Activated T-helper 2 cell treated with anti-CD3 and anti-CD28 coated beads, Interferon-gamma antibody, Interleukin-2, Interleukin-4, amounts not matched to agents 10 μg/mL and 5 μg/mL and 100 μg/mL, durations not matched to agents 14 hours and 24 hours and 36 hours (primary cell): ENCODE measurements at regions of chr6 and their contacts with region 1.

Region 1: GRCh38 chr6:90319044-90319443 is 22.4 kb upstream of the BACH2 start:
- DNase-seq: no peak
- H3K4me3 Mint-ChIP-seq: no peak overlapping the region
- H3K27ac Mint-ChIP-seq: peak overlapping the region; percentile 74
- H3K4me1 Mint-ChIP-seq: peaks cover 25% of the 10 kb centered on the region
- H3K27me3 Mint-ChIP-seq: peaks cover 5% of the 10 kb centered on the region

Region 2: DNA sequence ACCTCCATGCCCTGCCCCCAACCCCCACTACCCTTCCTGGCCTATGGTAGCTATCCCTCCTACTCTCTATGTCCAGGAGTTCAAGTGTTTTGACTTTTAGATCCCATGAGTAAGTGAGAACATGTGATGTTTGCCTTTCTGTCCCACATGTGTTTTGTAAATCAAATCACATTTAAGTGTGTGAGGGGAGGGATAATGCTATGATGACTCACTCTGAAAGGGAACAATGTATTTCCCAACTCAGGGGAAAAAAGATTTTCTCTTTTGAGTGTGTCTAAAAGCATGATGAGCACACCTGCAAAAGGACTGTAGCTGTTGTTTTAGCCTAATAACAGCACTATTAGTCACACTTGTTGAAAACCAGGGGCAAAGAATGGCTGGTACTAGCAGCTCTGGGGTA is 231.0 kb before region 1 on chr6:
- intact Hi-C with region 1: no loop called
- DNase-seq: no peak
- H3K4me3 Mint-ChIP-seq: no peak overlapping the region
- H3K27ac Mint-ChIP-seq: peak overlapping the region; percentile 24
- H3K4me1 Mint-ChIP-seq: peaks cover 60% of the 10 kb centered on the region
- H3K27me3 Mint-ChIP-seq: no peaks in the 10 kb centered on the region

Region 3: DNA sequence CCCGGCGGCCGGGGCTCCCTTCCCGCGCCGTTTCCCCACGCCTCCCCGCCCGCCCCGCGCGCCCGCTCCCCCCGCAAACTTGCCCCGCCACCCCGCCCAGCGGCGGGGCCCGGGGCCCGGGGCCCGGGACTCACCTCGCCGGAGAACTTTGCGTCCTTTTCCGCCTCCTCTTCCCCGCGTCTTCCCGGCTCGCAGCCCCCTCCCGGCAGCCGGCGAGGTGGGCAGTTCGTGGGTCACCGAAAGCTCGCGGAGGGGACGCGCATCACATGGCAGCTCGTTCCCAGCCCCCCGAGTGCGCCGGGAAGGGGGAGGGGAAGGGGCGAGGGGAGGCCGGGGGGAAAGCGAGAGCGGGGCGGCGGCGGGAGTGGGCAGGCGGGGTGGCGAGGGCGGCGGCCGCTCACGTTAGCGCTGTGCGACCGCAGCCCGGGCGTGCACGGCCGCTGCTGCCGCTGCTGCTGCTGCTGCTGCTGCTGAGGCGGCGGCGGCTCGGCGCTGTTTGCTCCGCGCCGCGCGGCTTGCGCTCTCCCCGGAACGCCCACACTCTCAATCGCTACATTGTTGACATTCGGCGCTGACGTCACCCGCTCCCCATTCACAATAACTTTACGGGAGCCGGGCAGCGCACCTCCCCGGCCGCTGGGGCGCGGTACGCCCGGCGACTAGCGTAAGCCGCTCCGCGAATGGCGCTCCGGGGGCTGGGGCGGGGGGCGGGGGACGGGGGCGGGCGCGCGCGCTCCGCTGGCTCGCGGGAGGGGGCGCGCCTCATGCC is 22.5 kb before region 1 on chr6 and contains the start of gene BACH2:
- intact Hi-C with region 1: loop called (anchors 2 kb)
- DNase-seq: peak; percentile 91
- H3K4me3 Mint-ChIP-seq: peak within 1 kb of the TSS; percentile 91
- H3K27ac Mint-ChIP-seq: peak within 1 kb of the TSS; percentile 86
- H3K4me1 Mint-ChIP-seq: peaks cover 50% of the 10 kb centered on the region
- H3K27me3 Mint-ChIP-seq: peaks cover 13% of the 10 kb centered on the region
- total RNA-seq, gene BACH2: 88.8 and 89.7 TPM in 2 replicates

Region 4: DNA sequence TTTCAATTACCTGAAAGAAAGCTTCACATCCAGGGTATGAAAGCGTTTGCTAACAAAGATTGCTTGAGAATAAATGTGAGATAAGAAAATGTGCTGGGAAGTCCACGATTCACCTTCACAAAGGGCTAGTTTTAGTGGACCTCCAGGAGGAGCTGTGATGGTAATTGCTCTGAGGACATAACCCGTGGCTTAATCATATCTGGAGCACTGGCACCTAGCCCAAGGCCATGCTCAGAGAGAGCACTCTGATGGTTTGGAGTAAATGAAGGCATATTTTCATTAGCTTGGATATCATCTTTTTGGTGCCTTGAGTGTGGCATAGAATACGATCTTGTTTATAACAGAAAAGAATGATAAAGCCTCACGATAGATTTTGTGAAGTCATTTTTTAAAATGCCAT is 24.5 kb after region 1 on chr6:
- intact Hi-C with region 1: no loop called
- DNase-seq: no peak
- H3K4me3 Mint-ChIP-seq: no peak overlapping the region
- H3K27ac Mint-ChIP-seq: no peak overlapping the region
- H3K4me1 Mint-ChIP-seq: peaks cover 16% of the 10 kb centered on the region
- H3K27me3 Mint-ChIP-seq: peaks cover 5% of the 10 kb centered on the region